Keratinocyte (primary cell): ENCODE measurements at regions of chr3 and their contacts with region 1.

Region 1: GRCh38 chr3:100893590-100893989 is 99.6 kb downstream of the ABI3BP start:
- DNase-seq: no peak
- H3K4me3 ChIP-seq: no peak overlapping the region
- H3K27ac ChIP-seq: no peak overlapping the region
- H3K4me1 ChIP-seq: no peaks in the 10 kb centered on the region
- H3K27me3 ChIP-seq: no peaks in the 10 kb centered on the region
- CTCF ChIP-seq: peak; percentile 76 to 84 (median 80)

Region 2: DNA sequence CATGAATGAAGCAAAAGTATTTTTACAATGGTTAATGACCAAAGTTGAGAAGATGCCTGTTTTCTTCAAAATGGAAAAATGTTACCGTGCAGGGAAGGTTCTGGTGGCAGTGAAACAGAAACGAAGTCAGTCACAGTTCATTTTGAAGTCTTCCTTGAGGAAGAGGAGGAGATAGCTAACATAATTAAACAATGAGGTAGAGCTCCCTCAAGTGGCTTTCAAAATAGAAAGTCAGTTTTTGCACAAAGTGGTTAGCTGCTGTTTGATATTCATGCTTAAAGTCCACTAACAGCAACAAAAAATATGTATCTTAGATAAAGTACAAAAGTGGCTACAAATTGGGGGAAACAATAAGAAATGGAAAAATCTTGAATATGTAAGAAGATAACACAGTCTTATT is 97.0 kb before region 1 on chr3:
- dilution Hi-C with region 1: loop called (anchors 25 kb)
- DNase-seq: no peak
- H3K4me3 ChIP-seq: no peak overlapping the region
- H3K27ac ChIP-seq: no peak overlapping the region
- H3K4me1 ChIP-seq: peaks cover 10% of the 10 kb centered on the region
- H3K27me3 ChIP-seq: no peaks in the 10 kb centered on the region
- CTCF ChIP-seq: peak in 1 of 3 experiments; percentile 22

Region 3: GRCh38 chr3:101253396-101253795 is 359.8 kb after region 1 on chr3:
- dilution Hi-C with region 1: no loop called
- DNase-seq: no peak
- H3K4me3 ChIP-seq: no peak overlapping the region
- H3K27ac ChIP-seq: no peak overlapping the region
- H3K4me1 ChIP-seq: no peaks in the 10 kb centered on the region
- H3K27me3 ChIP-seq: no peaks in the 10 kb centered on the region
- CTCF ChIP-seq: no peak